Dorsolateral prefrontal cortex (tissue), 120 donors: ENCODE measurements at regions of chr19 and their contacts with region 1.

Region 1: GRCh38 chr19:6279931-6280591 is at the start of gene MLLT1:
- DNase-seq: peak; percentile 94 to 99 (median 97)
- H3K4me3 ChIP-seq: peak within 1 kb of the TSS; percentile 44 to 95 (median 81)
- H3K27ac ChIP-seq: peak within 1 kb of the TSS in 55 of 59 donors; percentile 1 to 87 (median 71)
- H3K27me3 ChIP-seq: no peaks in the 10 kb centered on the region
- CTCF ChIP-seq: peak; percentile 39 to 95 (median 80)
- total RNA-seq, gene MLLT1: 67.9 to 201 (median 99.1) TPM

Region 2: DNA sequence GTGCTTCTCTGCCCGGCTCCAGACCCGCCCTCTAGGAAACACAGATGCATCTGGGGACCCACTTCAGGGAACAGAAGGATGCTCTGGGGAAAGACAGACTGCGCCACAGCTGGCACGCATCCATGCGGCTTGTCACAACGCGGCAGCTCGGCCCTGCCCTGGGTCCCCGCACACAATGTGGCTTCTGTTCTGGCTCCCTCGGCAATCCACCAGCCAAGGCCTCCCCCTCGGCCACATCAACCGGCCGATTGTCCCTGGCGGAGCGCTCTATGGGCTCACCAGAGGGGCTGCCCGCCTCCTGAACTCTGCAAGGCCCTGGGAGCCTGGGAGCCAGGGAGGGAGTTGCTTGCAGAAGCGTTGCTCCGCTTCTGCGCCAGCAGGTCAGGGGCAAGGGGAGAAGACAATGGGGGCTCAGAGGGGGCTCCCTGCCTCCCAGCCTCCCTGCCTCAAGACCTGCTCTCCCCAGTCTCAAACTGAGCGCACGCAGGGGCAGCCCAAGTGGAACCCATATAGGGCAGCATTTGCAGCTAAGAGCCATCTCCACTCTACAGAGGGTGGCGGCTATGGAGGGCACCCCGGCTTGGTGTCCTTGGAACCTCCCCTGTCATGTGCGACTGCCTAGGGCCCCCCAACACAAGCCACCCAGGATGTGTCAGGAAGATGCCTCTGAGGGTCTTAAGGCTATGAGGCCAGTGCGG is 38.2 kb before region 1 on chr19:
- intact Hi-C with region 1: loop called (anchors 2 kb)
- DNase-seq: peak; percentile 75 to 96 (median 94)
- H3K4me3 ChIP-seq: peak overlapping the region in 55 of 59 donors; percentile 5 to 62 (median 38)
- H3K27ac ChIP-seq: peak overlapping the region; percentile 14 to 96 (median 86)
- H3K27me3 ChIP-seq: no peaks in the 10 kb centered on the region
- CTCF ChIP-seq: peak in 29 of 56 donors; percentile 8 to 51 (median 28)

Region 3: GRCh38 chr19:6372594-6373095 is 92.6 kb after region 1 on chr19 and contains the start of gene ALKBH7:
- intact Hi-C with region 1: no loop called
- DNase-seq: peak; percentile 87 to 100 (median 99)
- H3K4me3 ChIP-seq: peak within 1 kb of the TSS; percentile 65 to 99 (median 93)
- H3K27ac ChIP-seq: peak within 1 kb of the TSS; percentile 45 to 100 (median 97)
- H3K27me3 ChIP-seq: no peaks in the 10 kb centered on the region
- CTCF ChIP-seq: peak in 31 of 56 donors; percentile 2 to 61 (median 32)
- total RNA-seq, gene ALKBH7: 39.9 to 75.3 (median 52.4) TPM

Region 4: DNA sequence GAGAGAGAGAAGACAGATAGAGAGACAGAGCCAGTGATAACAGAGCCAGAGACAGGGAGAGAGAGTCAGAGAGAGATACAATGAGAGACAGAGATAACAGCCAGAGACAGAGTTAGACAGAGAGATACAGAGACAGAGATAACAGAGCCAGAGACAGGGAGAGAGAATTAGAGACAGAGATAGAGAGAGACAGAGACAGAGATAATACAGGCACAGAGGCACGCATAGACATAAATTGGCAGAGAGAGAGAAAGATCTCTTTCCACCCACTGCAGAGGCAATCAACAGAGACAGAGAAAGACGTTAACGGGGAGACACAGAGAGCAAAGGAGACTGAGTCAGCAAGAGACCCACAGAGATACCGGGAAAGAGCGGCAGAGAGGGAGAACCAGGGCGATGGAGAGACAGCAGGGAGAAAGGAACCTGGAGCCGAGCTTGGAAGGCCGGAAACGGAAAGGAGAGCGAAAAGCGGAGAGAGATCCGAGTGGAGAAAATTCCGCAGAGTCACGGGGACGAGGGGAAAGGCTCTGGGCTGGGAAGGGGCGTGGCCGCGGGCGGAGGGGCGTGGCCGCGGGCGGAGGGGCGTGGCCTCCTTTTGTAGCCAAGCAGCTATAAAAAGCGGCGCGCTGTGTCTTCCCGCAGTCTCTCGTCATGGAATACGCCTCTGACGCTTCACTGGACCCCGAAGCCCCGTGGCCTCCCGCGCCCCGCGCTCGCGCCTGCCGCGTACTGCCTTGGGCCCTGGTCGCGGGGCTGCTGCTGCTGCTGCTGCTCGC is 250.5 kb after region 1 on chr19 and contains the start of gene TNFSF9:
- intact Hi-C with region 1: loop called in 1 of 2 experiments (anchors 10 kb)
- DNase-seq: peak; percentile 94 to 97 (median 96)
- H3K4me3 ChIP-seq: peak within 1 kb of the TSS; percentile 60 to 95 (median 82)
- H3K27ac ChIP-seq: peak within 1 kb of the TSS; percentile 10 to 97 (median 88)
- H3K27me3 ChIP-seq: peaks cover 0 to 5% (median 0%) of the 10 kb centered on the region in 45 donors
- CTCF ChIP-seq: peak in 15 of 56 donors; percentile 7 to 42 (median 22)
- total RNA-seq, gene TNFSF9: 2.4 to 16.3 (median 4.8) TPM